Activated CD4-positive, alpha-beta T cell treated with anti-CD3 and anti-CD28 coated beads for 36 hours (primary cell): ENCODE measurements at regions of chr9 and their contacts with region 1.

Region 1: GRCh38 chr9:95004411-95005277 is 278.1 kb downstream of the AOPEP start:
- DNase-seq: peak; percentile 57
- ATAC-seq: peak; percentile 65
- H3K4me3 Mint-ChIP-seq: peak overlapping the region; percentile 69
- H3K27ac Mint-ChIP-seq: no peak overlapping the region
- H3K4me1 Mint-ChIP-seq: peaks cover 19% of the 10 kb centered on the region
- H3K27me3 Mint-ChIP-seq: peaks cover 28% of the 10 kb centered on the region

Region 2: GRCh38 chr9:94827584-94828304 is 176.9 kb before region 1 on chr9:
- CTCF ChIA-PET with region 1: no interaction called
- POLR2A ChIA-PET with region 1: no interaction called
- intact Hi-C with region 1: no loop called
- DNase-seq: no peak
- ATAC-seq: no peak
- H3K4me3 Mint-ChIP-seq: no peak overlapping the region
- H3K27ac Mint-ChIP-seq: no peak overlapping the region
- H3K4me1 Mint-ChIP-seq: no peaks in the 10 kb centered on the region
- H3K27me3 Mint-ChIP-seq: no peaks in the 10 kb centered on the region

Region 3: GRCh38 chr9:94860968-94861871 is 143.4 kb before region 1 on chr9:
- CTCF ChIA-PET with region 1: no interaction called
- POLR2A ChIA-PET with region 1: no interaction called
- intact Hi-C with region 1: loop called in 1 of 2 experiments (anchors 10 kb)
- DNase-seq: peak; percentile 80
- ATAC-seq: peak; percentile 90
- H3K4me3 Mint-ChIP-seq: peak overlapping the region; percentile 6
- H3K27ac Mint-ChIP-seq: peak overlapping the region; percentile 66
- H3K4me1 Mint-ChIP-seq: peaks cover 37% of the 10 kb centered on the region
- H3K27me3 Mint-ChIP-seq: peaks cover 3% of the 10 kb centered on the region

Region 4: DNA sequence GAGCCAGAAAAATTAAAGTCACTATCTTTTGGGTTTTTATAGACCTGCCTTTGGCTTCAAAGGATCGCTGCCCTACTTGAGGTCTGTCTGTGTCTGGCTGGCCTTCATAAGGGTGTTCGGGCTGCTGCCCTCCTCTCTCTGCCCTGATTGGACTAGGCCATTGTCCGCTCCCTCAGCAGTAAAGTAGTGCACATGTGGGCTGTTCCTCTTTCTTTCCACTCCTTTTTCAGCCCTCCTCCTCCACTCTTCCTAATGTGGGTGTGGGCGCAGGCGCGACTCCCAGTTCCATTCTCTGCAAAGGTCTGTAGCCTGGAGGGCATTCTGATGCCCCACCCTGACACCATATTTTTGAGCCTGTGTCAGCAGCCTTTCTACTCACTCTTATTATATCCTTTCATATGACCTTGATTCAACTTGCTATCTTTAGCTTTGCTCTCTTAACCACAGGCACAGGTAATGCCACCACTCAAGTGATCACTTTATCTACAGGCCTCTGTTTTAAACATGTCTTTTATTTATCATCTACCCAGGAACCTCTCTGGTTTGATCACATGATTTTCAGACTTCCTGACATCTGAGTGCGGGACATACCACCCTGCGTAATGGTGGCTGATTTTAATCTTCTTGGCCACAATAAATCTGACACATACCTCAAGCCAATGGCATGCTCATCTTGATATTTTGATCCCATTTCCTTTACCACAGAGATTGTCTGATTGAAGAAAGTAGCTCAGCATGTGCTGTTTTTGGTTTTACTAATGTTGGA is 133.7 kb before region 1 on chr9:
- CTCF ChIA-PET with region 1: no interaction called
- POLR2A ChIA-PET with region 1: no interaction called
- intact Hi-C with region 1: loop called (anchors 5 to 10 kb)
- DNase-seq: peak; percentile 42
- ATAC-seq: peak; percentile 63
- H3K4me3 Mint-ChIP-seq: no peak overlapping the region
- H3K27ac Mint-ChIP-seq: peak overlapping the region; percentile 79
- H3K4me1 Mint-ChIP-seq: peaks cover 45% of the 10 kb centered on the region
- H3K27me3 Mint-ChIP-seq: no peaks in the 10 kb centered on the region

Region 5: DNA sequence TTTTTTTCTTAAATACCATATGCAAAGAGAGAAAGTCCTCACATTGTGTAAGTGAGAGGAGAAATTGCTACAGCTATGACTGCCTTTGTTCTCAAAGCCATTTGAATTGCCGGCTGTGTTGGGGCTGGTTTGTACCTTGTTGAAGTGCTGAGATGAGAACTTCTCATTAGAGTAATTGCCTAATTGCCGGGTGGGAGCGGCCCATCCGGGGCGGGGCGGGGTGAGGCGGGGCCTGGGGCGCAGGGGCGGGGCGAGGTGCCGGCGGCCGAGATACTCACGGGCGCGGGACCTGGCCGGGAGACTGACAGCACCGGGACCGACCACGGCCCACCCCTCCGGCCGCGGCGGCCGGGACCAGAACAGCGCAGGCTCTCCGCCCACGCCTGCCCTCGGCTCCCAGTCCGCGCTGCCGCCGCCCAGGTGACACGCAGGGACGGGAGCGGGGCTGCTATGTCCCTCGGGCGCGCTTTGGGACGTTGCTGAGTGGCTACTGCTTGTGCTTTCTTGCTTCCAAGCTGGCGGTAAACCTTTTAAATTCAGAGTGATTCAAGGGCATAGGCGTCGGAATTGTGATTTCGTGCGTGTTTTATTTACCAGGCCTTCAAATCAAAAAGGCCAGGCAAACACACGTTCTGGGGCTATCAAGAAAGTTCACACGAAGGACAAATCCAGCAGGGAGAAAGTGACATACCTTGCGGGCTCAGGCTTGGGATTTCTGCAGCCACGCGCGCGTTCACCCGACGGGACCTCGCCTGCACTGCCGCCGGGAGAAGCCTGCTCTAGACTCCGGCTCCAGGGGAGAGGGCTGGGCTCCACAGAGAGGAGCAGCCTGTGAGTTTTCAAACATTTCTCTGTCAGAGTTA is 43.8 kb after region 1 on chr9:
- CTCF ChIA-PET with region 1: no interaction called
- POLR2A ChIA-PET with region 1: no interaction called
- intact Hi-C with region 1: loop called in 1 of 2 experiments (anchors 1 kb)
- DNase-seq: peak; percentile 65
- ATAC-seq: peak; percentile 83
- H3K4me3 Mint-ChIP-seq: peak overlapping the region; percentile 69
- H3K27ac Mint-ChIP-seq: no peak overlapping the region
- H3K4me1 Mint-ChIP-seq: peaks cover 8% of the 10 kb centered on the region
- H3K27me3 Mint-ChIP-seq: peaks cover 14% of the 10 kb centered on the region